ENCODE measurements at regions of chr2 and their contacts with region 1.

Region 1: DNA sequence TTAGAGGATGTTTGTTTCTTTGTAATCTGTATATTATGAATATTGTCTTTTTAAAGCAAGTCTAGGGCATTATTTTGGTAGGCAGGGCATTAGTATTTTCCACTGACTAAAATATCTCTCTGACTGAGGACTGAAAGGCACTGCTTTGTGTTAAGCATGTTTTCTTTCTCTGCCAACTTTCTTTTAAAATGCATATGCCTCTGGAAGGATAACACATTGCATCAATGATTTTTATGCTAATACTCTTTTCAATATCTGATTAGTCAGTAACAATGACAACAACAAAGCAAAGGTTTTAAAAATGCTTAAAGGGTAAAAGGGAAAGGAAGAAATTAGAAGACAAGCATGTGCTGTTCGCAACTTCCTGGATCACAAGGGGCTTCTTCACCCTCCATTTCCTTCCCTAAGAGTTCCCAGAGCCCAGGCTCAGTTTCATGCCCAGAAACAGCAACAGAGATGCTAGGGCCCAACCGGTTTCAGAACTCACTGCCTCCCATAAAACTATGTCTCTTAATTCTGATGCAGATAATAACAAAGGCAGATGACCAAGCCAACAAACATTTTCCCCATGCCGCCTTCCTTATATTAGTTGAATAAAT is 786.8 kb upstream of the ACVR2A start:
- DNase-seq: no peak
- H3K4me3 ChIP-seq: no peak overlapping the region
- H3K27ac ChIP-seq: no peak overlapping the region
- H3K27me3 ChIP-seq: no peaks in the 10 kb centered on the region
- CTCF ChIP-seq: no peak

Region 2: DNA sequence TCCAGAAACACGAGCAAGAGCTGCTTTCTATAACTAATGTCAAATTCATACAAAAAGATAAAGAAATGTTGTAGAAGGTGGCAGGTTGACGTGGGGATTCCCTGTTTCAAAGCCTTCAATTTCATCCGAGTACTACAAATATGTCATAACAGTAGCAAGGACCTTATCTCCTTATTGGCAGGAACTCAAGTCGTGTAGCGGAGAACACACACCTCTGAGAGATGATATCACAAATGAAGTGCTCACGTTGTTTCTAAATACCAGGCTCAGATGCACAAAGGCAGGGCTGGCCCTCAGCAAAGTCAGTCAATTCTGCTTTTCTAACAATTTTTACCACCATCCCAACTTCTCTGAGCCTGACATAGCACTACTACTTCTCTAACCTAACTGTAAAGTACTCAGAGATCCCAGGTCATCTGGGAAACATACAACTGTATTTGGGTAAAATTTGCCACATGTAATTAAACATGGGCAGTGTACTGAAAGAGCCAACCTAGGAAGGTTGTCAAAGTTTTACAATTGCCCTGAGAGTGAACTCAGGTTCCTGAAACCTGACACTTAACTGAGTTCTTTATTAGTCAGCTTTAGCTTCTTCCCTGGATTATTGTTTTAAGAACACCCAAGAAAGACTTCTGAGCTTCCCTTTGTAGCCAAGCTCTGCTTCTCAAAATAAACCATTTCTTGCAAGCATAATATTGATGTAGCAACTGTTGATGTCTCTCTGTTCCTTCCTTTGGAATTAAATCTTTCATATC is 26.8 kb before region 1 on chr2:
- CTCF ChIA-PET with region 1: no interaction called
- POLR2A ChIA-PET with region 1: no interaction called
- DNase-seq: no peak
- H3K4me3 ChIP-seq: no peak overlapping the region
- H3K27ac ChIP-seq: no peak overlapping the region
- H3K27me3 ChIP-seq: no peaks in the 10 kb centered on the region
- CTCF ChIP-seq: no peak

Region 3: DNA sequence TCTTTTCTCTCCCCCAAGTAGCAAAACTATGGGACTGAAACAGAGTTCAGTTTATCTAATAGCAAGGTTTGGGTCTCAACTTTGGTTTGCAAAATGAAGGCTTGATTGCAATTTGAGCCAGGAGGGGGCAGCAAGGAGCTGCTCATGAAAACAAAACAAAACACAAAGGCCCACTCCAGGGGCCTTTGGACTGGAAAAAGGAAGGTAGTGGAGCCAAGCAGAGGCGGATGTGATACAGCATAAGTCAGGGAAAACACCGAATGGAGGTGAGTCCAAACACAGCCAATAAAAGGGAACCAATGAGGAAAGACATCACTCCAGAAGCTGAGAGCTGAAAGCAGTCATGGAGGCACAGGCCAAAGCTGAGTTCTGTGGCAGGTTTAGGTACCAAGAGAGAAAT is 12.9 kb before region 1 on chr2:
- CTCF ChIA-PET with region 1: interaction called, 14 read pairs
- POLR2A ChIA-PET with region 1: no interaction called
- DNase-seq: no peak
- H3K4me3 ChIP-seq: no peak overlapping the region
- H3K27ac ChIP-seq: no peak overlapping the region
- H3K27me3 ChIP-seq: no peaks in the 10 kb centered on the region
- CTCF ChIP-seq: peak; percentile 69

Measured in AG04450 (cell line).